CD4-positive, alpha-beta memory T cell (primary cell): ENCODE measurements at regions of chr9 and their contacts with region 1.

Region 1: GRCh38 chr9:114779352-114779845 is 26.4 kb downstream of the TNFSF15 start:
- DNase-seq: no peak
- H3K4me3 ChIP-seq: no peak overlapping the region
- H3K4me3 Mint-ChIP-seq: no peak overlapping the region
- H3K27ac ChIP-seq: no peak overlapping the region
- H3K27ac Mint-ChIP-seq: no peak overlapping the region
- H3K4me1 ChIP-seq: peaks cover 13% of the 10 kb centered on the region
- H3K4me1 Mint-ChIP-seq: peaks cover 16 to 25% (median 20%) of the 10 kb centered on the region in 4 donors
- H3K27me3 ChIP-seq: no peaks in the 10 kb centered on the region
- H3K27me3 Mint-ChIP-seq: peaks cover 0 to 3% of the 10 kb centered on the region in 2 donors

Region 2: GRCh38 chr9:114805670-114806525 is 26.5 kb after region 1 on chr9 and contains the start of gene TNFSF15:
- CTCF ChIA-PET with region 1: no interaction called
- POLR2A ChIA-PET with region 1: no interaction called
- intact Hi-C with region 1: no loop called
- DNase-seq: peak in 3 of 5 donors; percentile 5 to 24 (median 6)
- H3K4me3 ChIP-seq: no peak within 1 kb of the TSS
- H3K4me3 Mint-ChIP-seq: peak within 1 kb of the TSS in 7 of 8 donors; percentile 57 to 84 (median 66)
- H3K27ac ChIP-seq: no peak within 1 kb of the TSS
- H3K27ac Mint-ChIP-seq: peak within 1 kb of the TSS in 5 of 7 donors; percentile 14 to 85 (median 74)
- H3K4me1 ChIP-seq: peaks cover 21% of the 10 kb centered on the region
- H3K4me1 Mint-ChIP-seq: peaks cover 21 to 25% (median 23%) of the 10 kb centered on the region in 4 donors
- H3K27me3 ChIP-seq: no peaks in the 10 kb centered on the region
- H3K27me3 Mint-ChIP-seq: no peaks in the 10 kb centered on the region
- total RNA-seq, gene TNFSF15: 0.06 to 0.11 TPM

Region 3: DNA sequence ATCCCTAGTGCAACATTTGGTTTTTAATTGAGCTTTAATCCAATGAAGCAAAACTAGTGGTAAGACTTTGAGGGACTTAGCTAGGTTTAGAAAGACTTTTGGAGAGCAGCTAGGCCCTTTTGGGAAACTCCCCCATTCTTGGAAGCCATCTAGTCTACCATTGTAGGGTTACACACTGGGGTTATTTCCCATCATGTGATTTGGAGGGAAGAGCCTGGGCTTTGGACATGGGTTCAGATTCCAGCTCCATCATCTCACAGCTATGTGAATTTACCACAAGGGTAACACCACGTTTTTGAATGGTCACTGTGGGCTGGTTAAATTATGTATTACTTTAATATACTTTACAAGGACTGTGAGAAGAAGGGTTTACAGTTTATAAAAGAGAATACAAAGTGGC is 44.7 kb after region 1 on chr9:
- CTCF ChIA-PET with region 1: no interaction called
- POLR2A ChIA-PET with region 1: no interaction called
- intact Hi-C with region 1: loop called (anchors 10 kb)
- DNase-seq: no peak
- H3K4me3 ChIP-seq: no peak overlapping the region
- H3K4me3 Mint-ChIP-seq: no peak overlapping the region
- H3K27ac ChIP-seq: no peak overlapping the region
- H3K27ac Mint-ChIP-seq: no peak overlapping the region
- H3K4me1 ChIP-seq: no peaks in the 10 kb centered on the region
- H3K4me1 Mint-ChIP-seq: peaks cover 3 to 7% (median 6%) of the 10 kb centered on the region in 4 donors
- H3K27me3 ChIP-seq: no peaks in the 10 kb centered on the region
- H3K27me3 Mint-ChIP-seq: no peaks in the 10 kb centered on the region

Region 4: GRCh38 chr9:115024969-115025427 is 245.6 kb after region 1 on chr9:
- CTCF ChIA-PET with region 1: no interaction called
- POLR2A ChIA-PET with region 1: no interaction called
- intact Hi-C with region 1: no loop called
- DNase-seq: no peak
- H3K4me3 ChIP-seq: no peak overlapping the region
- H3K4me3 Mint-ChIP-seq: no peak overlapping the region
- H3K27ac ChIP-seq: no peak overlapping the region
- H3K27ac Mint-ChIP-seq: no peak overlapping the region
- H3K4me1 ChIP-seq: no peaks in the 10 kb centered on the region
- H3K4me1 Mint-ChIP-seq: peaks cover 0 to 2% (median 0%) of the 10 kb centered on the region in 4 donors
- H3K27me3 ChIP-seq: no peaks in the 10 kb centered on the region
- H3K27me3 Mint-ChIP-seq: peaks cover 0 to 3% of the 10 kb centered on the region in 2 donors